ENCODE measurements at regions of chr4 and their contacts with region 1.

Region 1: GRCh38 chr4:101347557-101348366 is 436 bp upstream of the PPP3CA start:
- DNase-seq: peak; percentile 98
- H3K4me3 ChIP-seq: peak overlapping the region; percentile 52 to 97 (median 54)
- H3K27ac ChIP-seq: peak overlapping the region; percentile 70
- H3K4me1 ChIP-seq: peaks cover 15% of the 10 kb centered on the region
- H3K27me3 ChIP-seq: no peaks in the 10 kb centered on the region
- CTCF ChIP-seq: peak in 1 of 2 donors; percentile 12
- POLR2A ChIP-seq: no peak

Region 2: DNA sequence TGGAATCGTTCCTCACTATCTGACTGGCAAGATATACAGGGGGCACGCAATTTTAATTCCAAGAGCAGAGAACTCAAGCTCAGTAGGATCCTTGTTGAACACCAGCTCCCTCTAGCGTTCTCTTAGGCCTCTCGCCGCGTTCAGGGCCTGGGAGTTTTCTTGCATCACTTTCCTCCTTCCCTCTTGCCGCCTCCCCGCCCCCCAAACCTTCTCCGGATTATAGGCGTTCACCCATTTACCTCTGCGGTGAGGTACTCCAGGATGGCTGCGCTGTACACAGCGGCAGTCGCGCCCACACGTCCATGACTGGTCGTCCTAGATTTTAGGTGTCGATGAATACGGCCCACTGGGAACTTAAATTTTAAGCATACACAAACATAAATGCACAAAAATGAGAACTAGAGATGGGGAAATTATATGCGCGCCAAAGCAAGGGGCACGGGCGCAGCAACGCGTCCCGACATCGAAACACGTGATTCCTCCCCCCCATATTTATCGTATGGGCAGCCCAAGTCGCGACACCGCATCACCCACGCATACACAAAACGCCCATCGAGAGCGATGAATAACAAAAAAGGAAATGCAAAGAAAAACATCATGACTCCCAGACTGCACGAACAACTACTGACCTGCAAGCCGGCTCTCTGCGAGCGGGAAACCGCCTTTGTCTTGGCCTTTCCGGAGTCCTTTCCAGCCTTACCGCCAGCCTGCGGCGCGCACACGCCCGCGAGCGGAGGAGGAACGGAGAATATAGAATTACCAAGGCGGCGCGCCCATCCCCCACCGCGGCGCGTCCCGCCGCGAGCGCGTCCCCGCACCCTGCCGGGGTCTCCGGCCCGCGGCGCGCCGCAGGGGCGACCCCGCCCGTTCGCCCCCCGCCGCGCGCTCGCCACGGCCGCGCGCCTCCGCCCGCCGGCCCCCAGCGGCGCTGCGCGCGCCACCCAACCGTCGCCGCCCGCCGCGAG is 1398.4 kb before region 1 on chr4:
- CTCF ChIA-PET with region 1: no interaction called
- POLR2A ChIA-PET with region 1: no interaction called
- dilution Hi-C with region 1: no loop called
- intact Hi-C with region 1: loop called (anchors 5 kb)
- DNase-seq: peak; percentile 91
- H3K4me3 ChIP-seq: peak overlapping the region; percentile 66 to 87 (median 86)
- H3K27ac ChIP-seq: peak overlapping the region; percentile 75
- H3K4me1 ChIP-seq: peaks cover 38% of the 10 kb centered on the region
- H3K27me3 ChIP-seq: no peaks in the 10 kb centered on the region
- CTCF ChIP-seq: peak; percentile 83 to 91
- POLR2A ChIP-seq: no peak

Region 3: DNA sequence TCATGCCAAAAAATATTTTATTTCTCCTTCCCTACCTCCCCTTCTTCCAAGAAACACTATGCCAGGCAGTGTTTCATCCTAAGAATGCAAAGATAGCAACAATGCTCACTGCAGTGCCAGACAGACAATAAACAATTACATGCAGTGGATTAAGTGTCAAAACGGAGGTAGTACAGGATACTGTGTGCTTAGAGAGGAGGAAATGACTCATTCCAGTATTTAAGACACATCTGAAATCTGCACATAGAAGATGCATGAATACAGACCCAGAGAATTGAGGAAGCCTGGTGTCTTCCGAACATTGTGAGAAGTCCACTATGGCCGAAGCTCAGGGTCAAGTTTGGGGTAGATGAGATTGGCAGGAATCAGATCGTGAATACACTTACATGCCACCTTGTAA is 326.8 kb before region 1 on chr4:
- CTCF ChIA-PET with region 1: no interaction called
- POLR2A ChIA-PET with region 1: no interaction called
- dilution Hi-C with region 1: no loop called
- intact Hi-C with region 1: loop called (anchors 5 kb)
- DNase-seq: peak; percentile 94
- H3K4me3 ChIP-seq: no peak overlapping the region
- H3K27ac ChIP-seq: peak overlapping the region; percentile 88
- H3K4me1 ChIP-seq: peaks cover 35% of the 10 kb centered on the region
- H3K27me3 ChIP-seq: no peaks in the 10 kb centered on the region
- CTCF ChIP-seq: no peak
- POLR2A ChIP-seq: no peak

Region 4: DNA sequence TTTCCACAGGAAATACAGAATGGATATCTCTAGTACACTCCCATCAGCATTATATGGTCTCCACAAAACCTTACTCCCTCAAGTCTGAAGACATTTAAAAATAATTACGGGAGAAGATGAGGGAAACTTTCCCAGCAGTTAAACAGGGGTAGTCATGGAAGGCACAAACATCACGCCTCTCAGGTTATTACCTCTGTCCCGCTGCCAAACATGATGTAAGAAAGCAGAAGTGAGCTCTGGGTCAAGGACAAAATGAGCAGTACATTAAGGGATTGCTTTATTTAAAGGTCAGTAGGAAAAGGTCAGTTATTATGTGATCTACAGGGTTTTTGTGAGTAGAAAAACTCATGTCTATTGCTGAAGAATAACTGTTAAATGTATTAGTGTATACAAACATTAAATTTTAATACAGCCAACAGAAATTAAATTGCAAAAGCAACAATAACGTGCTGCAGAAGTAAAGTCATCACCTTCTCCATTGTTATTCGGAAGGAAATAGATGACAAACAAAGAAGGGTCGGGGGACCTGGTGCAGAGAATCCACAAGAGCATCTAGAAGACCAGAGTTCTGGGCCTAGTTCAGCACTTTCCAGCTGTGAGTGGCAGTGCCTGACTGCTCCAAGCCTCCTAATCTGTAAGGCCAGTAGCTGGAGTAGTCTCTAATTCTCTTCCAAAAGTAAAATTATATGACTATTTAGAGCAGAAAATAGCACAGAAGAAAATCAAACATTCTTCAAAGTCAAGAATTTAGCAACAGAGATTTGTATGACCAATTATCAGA is 171.7 kb before region 1 on chr4:
- CTCF ChIA-PET with region 1: interaction called, 3 read pairs
- POLR2A ChIA-PET with region 1: interaction called, 3 read pairs
- dilution Hi-C with region 1: no loop called
- intact Hi-C with region 1: loop called (anchors 2 kb)
- DNase-seq: peak; percentile 68
- H3K4me3 ChIP-seq: no peak overlapping the region
- H3K27ac ChIP-seq: no peak overlapping the region
- H3K4me1 ChIP-seq: peaks cover 23% of the 10 kb centered on the region
- H3K27me3 ChIP-seq: no peaks in the 10 kb centered on the region
- CTCF ChIP-seq: no peak
- POLR2A ChIP-seq: no peak

Region 5: DNA sequence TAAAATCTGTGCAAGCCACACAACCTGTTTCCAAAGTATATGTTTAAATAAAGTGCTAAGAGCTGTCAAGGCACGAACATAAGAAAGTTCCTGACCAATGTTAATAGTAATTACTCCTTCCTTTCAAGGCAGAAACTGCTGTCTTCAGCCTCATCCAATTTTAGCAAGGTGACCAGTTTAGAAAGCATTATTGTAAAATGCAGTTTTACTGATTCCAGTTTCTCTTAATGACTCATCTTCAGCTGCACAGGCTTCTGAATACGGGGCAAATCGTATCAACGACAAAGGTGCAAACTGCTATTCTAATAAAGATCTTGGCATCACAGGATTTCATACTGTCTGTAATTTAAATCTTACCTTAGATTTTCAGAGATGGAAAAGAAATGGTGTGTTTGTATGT is 87.9 kb before region 1 on chr4:
- CTCF ChIA-PET with region 1: no interaction called
- POLR2A ChIA-PET with region 1: no interaction called
- dilution Hi-C with region 1: no loop called
- intact Hi-C with region 1: loop called (anchors 2 kb)
- DNase-seq: peak; percentile 66
- H3K4me3 ChIP-seq: peak overlapping the region in 1 of 3 experiments; percentile 37
- H3K27ac ChIP-seq: no peak overlapping the region
- H3K4me1 ChIP-seq: peaks cover 47% of the 10 kb centered on the region
- H3K27me3 ChIP-seq: no peaks in the 10 kb centered on the region
- CTCF ChIP-seq: no peak
- POLR2A ChIP-seq: no peak

Region 6: DNA sequence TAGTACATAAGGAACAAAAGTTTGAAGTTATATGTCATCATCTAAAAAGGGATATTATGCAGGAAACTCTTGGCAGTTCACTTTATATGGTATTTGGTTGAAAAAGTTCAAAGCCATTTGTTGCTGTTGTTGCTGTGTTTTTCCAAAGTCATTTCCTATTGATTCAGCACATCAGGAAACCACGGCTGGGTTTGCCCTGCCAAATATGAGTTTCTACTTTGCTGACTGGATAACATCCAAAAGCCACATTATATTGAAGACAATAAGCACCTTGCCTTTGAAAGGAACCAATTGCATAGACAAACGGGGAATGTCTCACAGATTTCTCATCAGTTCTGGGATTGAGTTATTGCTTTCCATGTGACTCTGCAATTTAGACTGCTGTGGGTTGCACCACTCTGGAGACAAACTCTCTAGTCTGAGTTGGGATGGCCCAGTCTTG is 791.4 kb after region 1 on chr4:
- CTCF ChIA-PET with region 1: no interaction called
- POLR2A ChIA-PET with region 1: no interaction called
- dilution Hi-C with region 1: no loop called
- intact Hi-C with region 1: loop called (anchors 1 kb)
- DNase-seq: peak; percentile 98
- H3K4me3 ChIP-seq: peak overlapping the region in 1 of 3 experiments; percentile 8
- H3K27ac ChIP-seq: peak overlapping the region; percentile 99
- H3K4me1 ChIP-seq: peaks cover 40% of the 10 kb centered on the region
- H3K27me3 ChIP-seq: no peaks in the 10 kb centered on the region
- CTCF ChIP-seq: no peak
- POLR2A ChIP-seq: peak; percentile 52

Measured in endothelial cell of umbilical vein (primary cell).